Heart left ventricle (tissue), 16 donors: ENCODE measurements at regions of chr6 and their contacts with region 1.

Region 1: GRCh38 chr6:12233693-12234571 is 56.2 kb upstream of the EDN1 start:
- DNase-seq: peak in 1 of 5 donors; percentile 31
- ATAC-seq: peak in 3 of 4 donors; percentile 52 to 66 (median 60)
- H3K4me3 ChIP-seq: no peak overlapping the region
- H3K27ac ChIP-seq: peak overlapping the region in 1 of 12 donors; percentile 11
- H3K4me1 ChIP-seq: peaks cover 0 to 42% (median 0%) of the 10 kb centered on the region in 12 donors
- H3K27me3 ChIP-seq: no peaks in the 10 kb centered on the region
- CTCF ChIP-seq: peak; percentile 58 to 80 (median 68)
- POLR2A ChIP-seq: no peak

Region 2: DNA sequence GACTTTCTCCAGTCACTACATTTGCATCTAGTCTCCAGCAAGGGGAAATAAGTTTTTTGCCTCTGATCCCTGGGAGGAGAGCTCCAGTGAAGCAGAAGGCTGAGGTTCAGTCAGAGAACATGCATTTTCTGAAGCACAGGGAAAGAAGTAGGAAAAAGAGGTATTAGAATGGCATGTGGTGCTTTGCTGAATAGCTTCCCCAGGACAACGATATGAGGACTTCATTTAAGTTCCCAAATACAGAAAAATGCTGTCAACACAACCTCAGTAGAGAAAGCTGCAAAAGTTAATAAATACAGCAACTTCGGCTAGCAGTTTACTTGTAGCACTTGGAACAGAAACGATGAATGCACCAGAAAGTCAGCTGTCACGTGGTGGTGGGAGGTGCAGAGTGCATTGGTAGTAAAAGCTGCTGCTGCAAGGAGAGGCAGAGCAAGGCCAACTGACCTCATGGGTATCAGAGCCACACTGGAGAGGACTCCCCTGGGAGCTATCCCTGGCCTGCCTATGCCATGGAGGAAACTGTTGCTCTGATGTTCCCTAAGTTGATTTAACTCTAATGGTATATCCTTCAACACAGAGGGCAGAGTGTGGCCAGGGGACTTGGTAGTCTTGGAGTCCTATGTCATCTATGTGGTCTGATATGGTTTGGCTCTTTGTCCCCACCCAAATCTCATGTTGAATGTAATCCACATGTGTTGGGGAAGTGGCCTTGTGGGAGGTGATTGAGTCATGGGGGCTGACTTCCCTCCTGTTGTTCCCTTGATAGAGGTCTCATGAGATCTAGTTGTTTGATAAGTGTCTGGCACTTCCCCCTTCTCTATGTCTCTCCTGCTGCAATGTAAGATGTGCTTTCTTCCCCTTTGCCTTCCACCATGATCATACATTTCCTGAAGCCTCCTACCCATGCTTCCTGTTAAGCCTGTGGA is 541.2 kb before region 1 on chr6:
- intact Hi-C with region 1: loop called in 4 of 10 experiments (anchors 5 to 10 kb)
- DNase-seq: no peak
- ATAC-seq: no peak
- H3K4me3 ChIP-seq: no peak overlapping the region
- H3K27ac ChIP-seq: no peak overlapping the region
- H3K4me1 ChIP-seq: no peaks in the 10 kb centered on the region
- H3K27me3 ChIP-seq: peaks cover 0 to 2% (median 0%) of the 10 kb centered on the region in 9 donors
- CTCF ChIP-seq: no peak
- POLR2A ChIP-seq: no peak

Region 3: GRCh38 chr6:11810039-11810541 is 423.8 kb before region 1 on chr6:
- intact Hi-C with region 1: loop called in 1 of 10 experiments (anchors 10 kb)
- DNase-seq: peak; percentile 74 to 92 (median 84)
- ATAC-seq: peak; percentile 95 to 97 (median 95)
- H3K4me3 ChIP-seq: no peak overlapping the region
- H3K27ac ChIP-seq: peak overlapping the region in 11 of 12 donors; percentile 22 to 81 (median 69)
- H3K4me1 ChIP-seq: peaks cover 3 to 28% (median 15%) of the 10 kb centered on the region in 12 donors
- H3K27me3 ChIP-seq: no peaks in the 10 kb centered on the region
- CTCF ChIP-seq: no peak
- POLR2A ChIP-seq: no peak

Region 4: GRCh38 chr6:12017263-12017662 is 216.7 kb before region 1 on chr6:
- intact Hi-C with region 1: no loop called
- DNase-seq: no peak
- ATAC-seq: no peak
- H3K4me3 ChIP-seq: no peak overlapping the region
- H3K27ac ChIP-seq: no peak overlapping the region
- H3K4me1 ChIP-seq: peaks cover 0 to 15% (median 7%) of the 10 kb centered on the region in 12 donors
- H3K27me3 ChIP-seq: no peaks in the 10 kb centered on the region
- CTCF ChIP-seq: no peak
- POLR2A ChIP-seq: no peak

Region 5: GRCh38 chr6:12060780-12061619 is 172.9 kb before region 1 on chr6:
- intact Hi-C with region 1: loop called in 1 of 10 experiments (anchors 10 kb)
- DNase-seq: peak; percentile 49 to 74 (median 70)
- ATAC-seq: peak; percentile 62 to 83 (median 80)
- H3K4me3 ChIP-seq: peak overlapping the region in 3 of 12 donors; percentile 4 to 38 (median 13)
- H3K27ac ChIP-seq: peak overlapping the region in 1 of 12 donors; percentile 14
- H3K4me1 ChIP-seq: peaks cover 0 to 50% (median 10%) of the 10 kb centered on the region in 12 donors
- H3K27me3 ChIP-seq: no peaks in the 10 kb centered on the region
- CTCF ChIP-seq: no peak
- POLR2A ChIP-seq: no peak

Region 6: DNA sequence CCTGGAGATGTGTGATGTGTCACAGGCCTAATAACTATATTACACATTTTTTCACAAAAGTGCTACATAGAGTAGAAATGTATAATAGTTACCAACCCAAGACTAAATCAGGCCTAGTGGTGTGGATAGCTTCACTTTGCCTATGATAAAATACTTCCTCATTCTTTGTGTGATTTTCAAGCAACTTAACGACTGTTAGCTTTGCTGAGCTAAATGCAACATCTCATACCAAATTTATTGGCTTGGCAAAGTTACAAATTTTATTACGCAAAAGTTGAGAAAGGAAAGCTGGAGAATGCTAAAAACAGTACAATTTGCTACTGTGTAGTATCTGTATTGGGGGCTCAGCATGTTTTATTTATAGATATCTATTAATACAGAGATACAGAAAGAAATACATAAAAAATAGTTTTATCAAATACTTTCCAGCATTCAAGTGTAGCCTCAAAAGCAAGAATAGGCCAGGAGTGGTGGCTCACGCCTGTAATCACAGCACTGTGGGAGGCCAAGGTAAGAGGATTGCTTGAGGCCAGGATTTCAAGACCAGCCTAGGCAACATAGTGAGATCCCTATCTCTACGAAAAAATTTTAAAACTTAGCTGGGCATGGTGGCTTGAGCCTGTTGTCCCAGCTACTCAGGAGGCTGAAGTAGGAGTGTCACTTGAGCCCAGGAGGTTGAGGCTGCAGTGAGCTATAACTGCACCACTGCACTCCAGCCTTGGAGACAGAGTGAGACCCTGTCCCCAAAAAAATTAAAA is 52.6 kb after region 1 on chr6:
- intact Hi-C with region 1: no loop called
- DNase-seq: no peak
- ATAC-seq: no peak
- H3K4me3 ChIP-seq: no peak overlapping the region
- H3K27ac ChIP-seq: no peak overlapping the region
- H3K4me1 ChIP-seq: peaks cover 0 to 24% (median 3%) of the 10 kb centered on the region in 12 donors
- H3K27me3 ChIP-seq: peaks cover 0 to 7% (median 0%) of the 10 kb centered on the region in 9 donors
- CTCF ChIP-seq: no peak
- POLR2A ChIP-seq: no peak